ENCODE measurements at regions of chr12 and their contacts with region 1.

Region 1: GRCh38 chr12:31245822-31246469 is 80.0 kb downstream of the SINHCAF start:
- DNase-seq: no peak
- ATAC-seq: no peak
- H3K4me3 ChIP-seq: no peak overlapping the region
- H3K27ac ChIP-seq: no peak overlapping the region
- H3K4me1 ChIP-seq: no peaks in the 10 kb centered on the region
- H3K27me3 ChIP-seq: 0 out of 2 replicates have a peak, but pooled peaks cover 6% of the 10 kb centered on the region
- CTCF ChIP-seq: peak; percentile 19; the same call in 1 of the 2 replicates

Region 2: GRCh38 chr12:31272607-31273225 is 26.8 kb after region 1 on chr12:
- CTCF ChIA-PET with region 1: interaction called, 13 read pairs
- POLR2A ChIA-PET with region 1: no interaction called
- intact Hi-C with region 1: no loop called
- DNase-seq: no peak
- ATAC-seq: no peak
- H3K4me3 ChIP-seq: no peak overlapping the region
- H3K27ac ChIP-seq: no peak overlapping the region
- H3K4me1 ChIP-seq: no peaks in the 10 kb centered on the region
- H3K27me3 ChIP-seq: no peaks in the 10 kb centered on the region
- CTCF ChIP-seq: no peak

Region 3: DNA sequence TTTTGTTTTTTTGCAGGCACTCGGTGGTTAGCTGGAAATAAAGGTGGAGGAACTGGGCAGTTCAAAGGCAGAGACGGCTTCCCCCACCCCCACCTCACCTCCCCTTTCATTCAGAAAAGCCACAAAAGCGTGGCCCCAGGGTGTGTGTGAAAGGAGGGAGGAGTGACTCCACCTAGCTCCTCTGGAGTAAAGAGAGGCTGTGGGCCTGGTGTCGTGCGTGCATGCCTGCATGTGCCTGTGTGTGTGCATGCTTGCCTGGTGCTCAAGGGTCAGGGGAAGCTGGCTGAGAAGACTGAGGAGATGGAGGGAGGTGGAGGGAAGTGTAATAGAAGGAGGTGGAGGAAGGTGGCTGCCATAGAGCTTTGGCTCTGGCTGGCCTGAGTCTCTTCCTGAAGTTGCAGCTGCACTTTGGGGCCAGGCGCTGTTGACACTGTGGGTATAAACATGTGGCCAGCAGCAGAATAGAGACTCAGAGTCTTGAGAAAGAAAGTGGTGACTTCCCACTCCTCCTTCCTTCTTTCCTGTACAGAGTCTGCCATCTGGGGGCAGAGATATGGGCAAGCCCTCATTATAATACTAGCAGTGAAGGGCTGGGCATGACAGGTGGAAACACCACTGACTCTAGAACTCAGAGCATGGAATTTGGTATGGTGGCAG is 116.9 kb after region 1 on chr12:
- CTCF ChIA-PET with region 1: no interaction called
- POLR2A ChIA-PET with region 1: no interaction called
- intact Hi-C with region 1: loop called (anchors 1 kb)
- DNase-seq: peak; percentile 26
- ATAC-seq: peak; percentile 54
- H3K4me3 ChIP-seq: no peak overlapping the region
- H3K27ac ChIP-seq: no peak overlapping the region
- H3K4me1 ChIP-seq: peaks cover 8% of the 10 kb centered on the region
- H3K27me3 ChIP-seq: no peaks in the 10 kb centered on the region
- CTCF ChIP-seq: no peak

Region 4: GRCh38 chr12:31386364-31386777 is 140.4 kb after region 1 on chr12:
- CTCF ChIA-PET with region 1: no interaction called
- POLR2A ChIA-PET with region 1: no interaction called
- intact Hi-C with region 1: no loop called
- DNase-seq: no peak
- ATAC-seq: no peak
- H3K4me3 ChIP-seq: no peak overlapping the region
- H3K27ac ChIP-seq: no peak overlapping the region
- H3K4me1 ChIP-seq: no peaks in the 10 kb centered on the region
- H3K27me3 ChIP-seq: no peaks in the 10 kb centered on the region
- CTCF ChIP-seq: no peak

Region 5: GRCh38 chr12:31629756-31630732 is 384.1 kb after region 1 on chr12:
- CTCF ChIA-PET with region 1: no interaction called
- POLR2A ChIA-PET with region 1: no interaction called
- intact Hi-C with region 1: loop called (anchors 10 kb)
- DNase-seq: no peak
- ATAC-seq: no peak
- H3K4me3 ChIP-seq: no peak overlapping the region
- H3K27ac ChIP-seq: no peak overlapping the region
- H3K4me1 ChIP-seq: no peaks in the 10 kb centered on the region
- H3K27me3 ChIP-seq: no peaks in the 10 kb centered on the region
- CTCF ChIP-seq: no peak

Measured in PC-3 (cell line).